Prostate gland (tissue), 2 donors: ENCODE measurements at regions of chr1 and their contacts with region 1.

Region 1: DNA sequence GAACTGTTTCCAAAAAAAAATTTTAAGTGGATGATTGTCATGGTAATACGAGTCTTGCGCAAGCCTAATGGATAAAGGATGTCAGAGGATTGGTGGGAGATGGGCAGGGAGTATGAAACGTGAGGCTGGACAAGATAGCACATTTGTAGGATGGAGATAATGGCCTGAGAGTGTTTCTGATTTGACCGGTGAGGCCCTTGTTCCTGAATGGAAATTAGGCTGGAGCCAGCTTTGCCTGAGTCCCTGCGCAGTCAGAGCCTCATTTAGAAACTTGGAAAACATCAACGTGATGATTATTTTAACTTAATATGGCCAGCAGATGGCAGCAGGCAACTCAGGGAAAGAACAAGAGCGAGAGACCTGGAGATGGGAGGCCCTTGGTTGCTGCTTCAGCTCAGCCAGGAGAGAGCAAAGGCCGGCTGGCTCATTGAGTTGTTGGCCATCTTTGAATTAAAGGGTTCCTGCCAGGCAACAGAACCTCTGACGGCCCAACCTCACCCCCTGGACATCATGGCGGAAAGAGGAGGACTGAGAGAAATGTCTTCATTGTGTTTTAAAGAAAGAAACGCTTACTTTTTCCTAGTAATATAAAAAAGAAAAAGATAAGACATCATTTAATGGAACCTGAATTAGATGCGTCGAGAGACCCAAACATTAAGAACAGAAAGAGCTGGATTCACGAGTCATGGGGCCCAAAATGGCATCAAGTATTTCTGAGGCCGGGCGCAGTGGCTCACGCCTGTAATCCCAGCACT is 80.3 kb downstream of the SELENOF start:
- DNase-seq: peak; percentile 78
- H3K4me3 ChIP-seq: no peak overlapping the region
- H3K27ac ChIP-seq: no peak overlapping the region
- H3K4me1 ChIP-seq: no peaks in the 10 kb centered on the region
- H3K27me3 ChIP-seq: no peaks in the 10 kb centered on the region
- CTCF ChIP-seq: peak; percentile 20 to 75 (median 64)
- POLR2A ChIP-seq: no peak

Region 2: GRCh38 chr1:85638412-85638811 is 1195.2 kb before region 1 on chr1:
- intact Hi-C with region 1: no loop called
- DNase-seq: no peak
- H3K4me3 ChIP-seq: no peak overlapping the region
- H3K27ac ChIP-seq: no peak overlapping the region
- H3K4me1 ChIP-seq: no peaks in the 10 kb centered on the region
- H3K27me3 ChIP-seq: no peaks in the 10 kb centered on the region
- CTCF ChIP-seq: no peak
- POLR2A ChIP-seq: no peak

Region 3: DNA sequence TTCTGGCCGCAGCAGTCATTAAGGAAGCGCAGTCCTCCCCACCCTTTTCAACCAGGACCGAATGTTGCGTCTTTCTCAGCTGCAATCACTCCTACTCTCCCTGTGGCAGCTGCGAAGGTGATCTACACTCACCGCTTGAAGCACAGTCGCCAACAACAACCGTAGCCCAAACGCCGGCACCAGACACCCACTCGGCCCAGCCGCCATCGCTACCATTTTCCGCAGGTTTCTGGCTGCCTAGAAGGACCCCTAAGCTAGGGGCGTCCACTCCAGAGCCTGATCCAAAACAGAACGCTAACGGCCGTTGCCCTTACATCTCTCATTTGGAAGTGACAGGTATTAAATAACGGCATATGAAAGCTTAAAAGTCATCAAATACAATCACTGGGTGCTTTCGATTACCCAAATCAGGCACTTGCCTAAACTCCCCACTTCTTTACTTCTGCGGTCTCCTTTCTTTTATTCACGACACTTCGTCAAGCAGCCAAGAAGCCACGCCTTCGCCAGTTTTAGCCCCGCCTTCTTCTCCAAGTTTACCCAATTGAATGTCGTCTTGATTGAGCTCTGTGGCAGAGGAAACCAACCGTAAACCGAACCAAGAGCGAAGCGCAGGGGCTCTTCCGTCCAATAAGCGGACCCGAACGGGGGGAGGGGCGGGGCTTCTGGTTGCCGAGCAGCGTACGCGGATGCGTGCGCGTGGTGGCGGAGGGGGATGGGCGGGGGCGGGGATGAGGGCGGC is 80.4 kb after region 1 on chr1 and contains the start of gene SELENOF:
- intact Hi-C with region 1: loop called (anchors 5 kb)
- DNase-seq: peak; percentile 99
- H3K4me3 ChIP-seq: peak within 1 kb of the TSS; percentile 83
- H3K27ac ChIP-seq: peak within 1 kb of the TSS; percentile 89
- H3K4me1 ChIP-seq: no peaks in the 10 kb centered on the region
- H3K27me3 ChIP-seq: no peaks in the 10 kb centered on the region
- CTCF ChIP-seq: peak in 2 of 4 experiments; percentile 16 to 21
- POLR2A ChIP-seq: peak; percentile 78
- total RNA-seq, gene SELENOF: 137 to 175 TPM

Region 4: GRCh38 chr1:86965012-86965826 is 131.6 kb after region 1 on chr1:
- intact Hi-C with region 1: loop called (anchors 5 kb)
- DNase-seq: no peak
- H3K4me3 ChIP-seq: no peak overlapping the region
- H3K27ac ChIP-seq: no peak overlapping the region
- H3K4me1 ChIP-seq: no peaks in the 10 kb centered on the region
- H3K27me3 ChIP-seq: no peaks in the 10 kb centered on the region
- CTCF ChIP-seq: peak in 3 of 4 experiments; percentile 44 to 52 (median 45)
- POLR2A ChIP-seq: no peak

Region 5: GRCh38 chr1:87084244-87084836 is 250.7 kb after region 1 on chr1:
- intact Hi-C with region 1: loop called (anchors 2 kb)
- DNase-seq: no peak
- H3K4me3 ChIP-seq: no peak overlapping the region
- H3K27ac ChIP-seq: no peak overlapping the region
- H3K4me1 ChIP-seq: no peaks in the 10 kb centered on the region
- H3K27me3 ChIP-seq: no peaks in the 10 kb centered on the region
- CTCF ChIP-seq: peak in 3 of 4 experiments; percentile 44 to 67 (median 57)
- POLR2A ChIP-seq: no peak